PC-9 (cell line): ENCODE measurements at regions of chr6 and their contacts with region 1.

Region 1: GRCh38 chr6:79570129-79571029 is 33.1 kb upstream of the LCA5 start:
- DNase-seq: peak; percentile 86 to 95
- H3K4me3 ChIP-seq: peak overlapping the region; percentile 46; the same call in 1 of the 2 replicates
- H3K27ac ChIP-seq: peak overlapping the region; percentile 84
- H3K4me1 ChIP-seq: peaks cover 55% of the 10 kb centered on the region
- H3K27me3 ChIP-seq: no peaks in the 10 kb centered on the region
- CTCF ChIP-seq: peak; percentile 70

Region 2: GRCh38 chr6:78832091-78832808 is 738.1 kb before region 1 on chr6:
- CTCF ChIA-PET with region 1: no interaction called
- POLR2A ChIA-PET with region 1: no interaction called
- intact Hi-C with region 1: no loop called
- DNase-seq: no peak
- H3K4me3 ChIP-seq: no peak overlapping the region
- H3K27ac ChIP-seq: no peak overlapping the region
- H3K4me1 ChIP-seq: no peaks in the 10 kb centered on the region
- H3K27me3 ChIP-seq: no peaks in the 10 kb centered on the region
- CTCF ChIP-seq: no peak

Region 3: GRCh38 chr6:79544939-79545450 is 25.4 kb before region 1 on chr6:
- CTCF ChIA-PET with region 1: no interaction called
- POLR2A ChIA-PET with region 1: no interaction called
- intact Hi-C with region 1: loop called (anchors 1 kb)
- DNase-seq: peak; percentile 79 to 94
- H3K4me3 ChIP-seq: no peak overlapping the region
- H3K27ac ChIP-seq: peak overlapping the region; percentile 64
- H3K4me1 ChIP-seq: peaks cover 19% of the 10 kb centered on the region
- H3K27me3 ChIP-seq: no peaks in the 10 kb centered on the region
- CTCF ChIP-seq: no peak; the same call in 1 of the 2 replicates

Region 4: GRCh38 chr6:79630883-79631692 is 60.7 kb after region 1 on chr6 and contains the start of gene SH3BGRL2:
- CTCF ChIA-PET with region 1: no interaction called
- POLR2A ChIA-PET with region 1: interaction called, 3 read pairs
- intact Hi-C with region 1: loop called (anchors 1 kb)
- DNase-seq: peak; percentile 37 to 75
- H3K4me3 ChIP-seq: peak within 1 kb of the TSS; percentile 90
- H3K27ac ChIP-seq: peak within 1 kb of the TSS; percentile 19; the same call in 1 of the 2 replicates
- H3K4me1 ChIP-seq: peaks cover 31% of the 10 kb centered on the region
- H3K27me3 ChIP-seq: no peaks in the 10 kb centered on the region
- CTCF ChIP-seq: no peak
- total RNA-seq, gene SH3BGRL2: 24.2 and 27.4 TPM in 2 replicates

Region 5: DNA sequence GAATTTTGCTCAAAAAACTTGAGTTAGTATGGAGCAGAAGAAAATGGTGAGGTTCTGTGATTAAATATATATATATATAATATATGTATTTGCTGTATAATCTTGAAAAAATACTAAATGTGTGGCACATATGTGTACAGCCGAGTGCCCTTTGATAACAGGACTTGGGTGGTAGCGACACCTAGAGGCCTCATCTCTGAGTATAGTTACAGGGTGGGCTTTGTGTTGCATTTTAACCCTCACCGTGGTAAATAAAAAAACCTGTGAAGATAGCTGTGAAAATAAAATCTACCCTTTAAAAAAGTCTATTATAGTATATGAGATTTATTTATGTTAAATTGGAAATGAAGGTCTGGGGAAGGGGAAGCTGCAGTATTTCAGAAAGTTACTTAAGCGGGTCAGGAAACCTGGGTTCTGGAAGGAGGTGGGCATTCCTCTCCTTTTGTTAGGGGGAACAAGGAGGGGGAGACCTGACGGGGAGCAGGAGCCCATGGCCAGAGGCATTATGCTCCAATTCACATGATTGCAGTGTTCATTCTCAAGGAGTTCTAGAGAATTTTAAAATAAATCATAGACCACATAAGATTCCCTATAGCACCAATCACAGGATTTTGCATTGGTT is 143.4 kb after region 1 on chr6:
- CTCF ChIA-PET with region 1: no interaction called
- POLR2A ChIA-PET with region 1: no interaction called
- intact Hi-C with region 1: loop called (anchors 1 kb)
- DNase-seq: peak in 1 of 2 experiments; percentile 45
- H3K4me3 ChIP-seq: no peak overlapping the region
- H3K27ac ChIP-seq: no peak overlapping the region
- H3K4me1 ChIP-seq: no peaks in the 10 kb centered on the region
- H3K27me3 ChIP-seq: no peaks in the 10 kb centered on the region
- CTCF ChIP-seq: peak; percentile 75